CD8-positive, alpha-beta T cell (primary cell): ENCODE measurements at regions of chr20 and their contacts with region 1.

Region 1: GRCh38 chr20:62136283-62137091 is 6.7 kb downstream of the PSMA7 start:
- DNase-seq: peak; percentile 59 to 86 (median 78)
- ATAC-seq: peak; percentile 61
- H3K4me3 ChIP-seq: no peak overlapping the region
- H3K4me3 Mint-ChIP-seq: no peak overlapping the region
- H3K27ac ChIP-seq: no peak overlapping the region
- H3K27ac Mint-ChIP-seq: peak overlapping the region; percentile 90
- H3K4me1 ChIP-seq: peaks cover 21% of the 10 kb centered on the region
- H3K4me1 Mint-ChIP-seq: peaks cover 42% of the 10 kb centered on the region
- H3K27me3 ChIP-seq: no peaks in the 10 kb centered on the region
- H3K27me3 Mint-ChIP-seq: no peaks in the 10 kb centered on the region
- CTCF ChIP-seq: peak; percentile 80

Region 2: GRCh38 chr20:61874501-61875026 is 261.9 kb before region 1 on chr20:
- CTCF ChIA-PET with region 1: no interaction called
- POLR2A ChIA-PET with region 1: no interaction called
- intact Hi-C with region 1: no loop called
- DNase-seq: no peak
- ATAC-seq: no peak
- H3K4me3 ChIP-seq: no peak overlapping the region
- H3K4me3 Mint-ChIP-seq: no peak overlapping the region
- H3K27ac ChIP-seq: no peak overlapping the region
- H3K27ac Mint-ChIP-seq: no peak overlapping the region
- H3K4me1 ChIP-seq: no peaks in the 10 kb centered on the region
- H3K4me1 Mint-ChIP-seq: no peaks in the 10 kb centered on the region
- H3K27me3 ChIP-seq: no peaks in the 10 kb centered on the region
- H3K27me3 Mint-ChIP-seq: no peaks in the 10 kb centered on the region
- CTCF ChIP-seq: no peak

Region 3: GRCh38 chr20:62065669-62066338 is 70.7 kb before region 1 on chr20 and contains the start of gene TAF4:
- CTCF ChIA-PET with region 1: interaction called, 5 read pairs
- POLR2A ChIA-PET with region 1: interaction called, 38 read pairs
- intact Hi-C with region 1: loop called (anchors 1 kb)
- DNase-seq: peak; percentile 69 to 92 (median 79)
- ATAC-seq: peak; percentile 77
- H3K4me3 ChIP-seq: peak within 1 kb of the TSS; percentile 54 to 70
- H3K4me3 Mint-ChIP-seq: peak within 1 kb of the TSS; percentile 90
- H3K27ac ChIP-seq: peak within 1 kb of the TSS; percentile 47 to 74
- H3K27ac Mint-ChIP-seq: peak within 1 kb of the TSS; percentile 95
- H3K4me1 ChIP-seq: peaks cover 42% of the 10 kb centered on the region
- H3K4me1 Mint-ChIP-seq: peaks cover 52% of the 10 kb centered on the region
- H3K27me3 ChIP-seq: no peaks in the 10 kb centered on the region
- H3K27me3 Mint-ChIP-seq: no peaks in the 10 kb centered on the region
- CTCF ChIP-seq: no peak
- total RNA-seq, gene TAF4: 9.8 to 14.1 TPM

Region 4: DNA sequence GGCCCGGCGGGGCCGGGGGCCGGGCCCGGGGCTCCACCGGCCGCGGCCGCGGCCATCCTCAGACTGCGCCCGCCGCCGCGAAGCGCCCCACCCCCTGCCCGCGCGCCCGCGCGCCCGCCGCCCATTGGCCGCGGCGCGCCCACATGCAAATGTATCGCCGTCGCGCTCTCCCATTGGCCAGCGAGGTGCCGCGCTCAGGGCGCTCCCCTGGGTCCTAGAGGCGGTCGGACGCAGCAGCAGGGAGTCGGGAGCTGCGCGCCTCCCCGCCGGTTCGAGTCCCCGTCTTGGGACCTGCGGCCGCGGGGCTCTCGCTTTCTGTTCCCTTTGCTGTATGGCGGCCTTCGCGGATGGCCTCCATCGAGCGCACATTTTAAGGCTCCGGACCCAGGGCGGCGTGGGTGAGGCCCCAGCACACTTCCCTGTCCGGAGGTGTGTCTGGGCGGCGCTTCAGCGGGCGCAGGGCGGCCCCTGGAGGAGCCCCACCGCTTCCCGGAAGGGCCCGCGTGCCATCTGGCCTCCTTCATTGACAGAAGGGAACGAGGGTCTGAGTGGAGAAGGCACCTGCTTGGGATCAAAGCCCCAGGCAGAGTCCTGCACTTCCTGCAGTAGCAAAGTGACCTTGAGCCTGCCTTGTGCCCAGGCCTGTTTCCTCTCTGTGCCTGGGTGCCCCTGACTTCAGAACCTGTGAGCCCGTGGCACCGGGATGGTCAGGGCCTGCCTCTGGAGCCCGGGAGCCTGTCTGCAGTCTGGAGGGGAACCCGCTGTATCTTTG is 270.9 kb after region 1 on chr20 and contains the start of gene CABLES2:
- CTCF ChIA-PET with region 1: no interaction called
- POLR2A ChIA-PET with region 1: no interaction called
- intact Hi-C with region 1: loop called in 1 of 2 experiments (anchors 5 kb)
- DNase-seq: peak; percentile 79 to 96 (median 90)
- ATAC-seq: peak; percentile 96
- H3K4me3 ChIP-seq: peak within 1 kb of the TSS; percentile 65 to 72
- H3K4me3 Mint-ChIP-seq: peak within 1 kb of the TSS; percentile 74
- H3K27ac ChIP-seq: peak within 1 kb of the TSS; percentile 33 to 54
- H3K27ac Mint-ChIP-seq: peak within 1 kb of the TSS; percentile 18
- H3K4me1 ChIP-seq: peaks cover 22% of the 10 kb centered on the region
- H3K4me1 Mint-ChIP-seq: peaks cover 26% of the 10 kb centered on the region
- H3K27me3 ChIP-seq: no peaks in the 10 kb centered on the region
- H3K27me3 Mint-ChIP-seq: no peaks in the 10 kb centered on the region
- CTCF ChIP-seq: no peak
- total RNA-seq, gene CABLES2: 4.5 to 5.1 TPM

Region 5: GRCh38 chr20:62652051-62652926 is 515.8 kb after region 1 on chr20:
- CTCF ChIA-PET with region 1: no interaction called
- POLR2A ChIA-PET with region 1: no interaction called
- intact Hi-C with region 1: no loop called
- DNase-seq: peak; percentile 44 to 88 (median 75)
- ATAC-seq: peak; percentile 59
- H3K4me3 ChIP-seq: peak overlapping the region; percentile 29 to 35
- H3K4me3 Mint-ChIP-seq: peak overlapping the region; percentile 80
- H3K27ac ChIP-seq: peak overlapping the region; percentile 82 to 83
- H3K27ac Mint-ChIP-seq: peak overlapping the region; percentile 97
- H3K4me1 ChIP-seq: peaks cover 24% of the 10 kb centered on the region
- H3K4me1 Mint-ChIP-seq: peaks cover 31% of the 10 kb centered on the region
- H3K27me3 ChIP-seq: no peaks in the 10 kb centered on the region
- H3K27me3 Mint-ChIP-seq: no peaks in the 10 kb centered on the region
- CTCF ChIP-seq: no peak